Caco-2 (cell line): ENCODE measurements at regions of chr21 and their contacts with region 1.

Region 1: DNA sequence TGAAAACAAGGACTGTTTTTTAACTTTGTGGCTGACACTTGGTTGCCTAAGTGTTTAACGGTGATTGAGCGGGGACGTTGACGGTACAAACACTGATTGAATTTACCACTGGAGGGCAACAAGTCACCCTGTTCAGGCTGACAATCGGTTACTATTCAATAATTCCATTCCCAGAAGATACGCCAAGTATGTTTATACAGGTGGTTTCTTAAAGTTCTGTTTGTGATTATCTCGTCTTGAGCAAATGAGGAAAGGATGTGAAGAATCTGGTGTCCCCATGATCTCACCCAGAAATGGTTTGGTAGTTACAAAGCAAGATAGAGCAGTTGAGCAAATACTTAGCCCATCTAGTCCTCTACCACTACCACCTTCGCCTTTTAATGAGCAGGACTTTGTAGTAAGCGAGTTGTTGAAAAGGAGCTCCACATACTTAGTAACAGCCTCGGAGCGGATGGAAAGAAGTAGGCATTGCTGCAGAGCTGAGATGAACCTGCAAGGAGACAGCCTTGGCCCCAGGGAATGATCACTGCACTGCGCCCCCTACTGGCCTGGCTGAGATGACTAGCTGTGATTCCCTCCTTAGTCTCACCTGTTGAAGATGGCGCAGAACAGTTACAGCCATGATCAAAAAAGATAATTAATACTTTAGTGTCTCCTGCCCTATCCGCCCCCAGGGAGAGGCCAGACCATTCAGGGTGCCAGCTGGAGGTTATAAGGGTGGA is 36.3 kb downstream of the IFNAR1 start:
- DNase-seq: peak; percentile 84 to 88
- H3K4me3 ChIP-seq: peak overlapping the region; percentile 31
- H3K4me3 Mint-ChIP-seq: peak overlapping the region; percentile 68
- H3K27ac Mint-ChIP-seq: peak overlapping the region; percentile 79
- H3K4me1 ChIP-seq: peaks cover 18% of the 10 kb centered on the region
- H3K4me1 Mint-ChIP-seq: peaks cover 14% of the 10 kb centered on the region
- H3K27me3 ChIP-seq: no peaks in the 10 kb centered on the region
- H3K27me3 Mint-ChIP-seq: no peaks in the 10 kb centered on the region
- CTCF ChIP-seq: peak; percentile 84 to 87

Region 2: GRCh38 chr21:33205476-33205875 is 155.6 kb before region 1 on chr21:
- CTCF ChIA-PET with region 1: interaction called, 19 read pairs
- POLR2A ChIA-PET with region 1: interaction called, 7 read pairs
- intact Hi-C with region 1: loop called (anchors 1 kb)
- DNase-seq: no peak
- H3K4me3 ChIP-seq: no peak overlapping the region
- H3K4me3 Mint-ChIP-seq: peak overlapping the region; percentile 60
- H3K27ac Mint-ChIP-seq: peak overlapping the region; percentile 77
- H3K4me1 ChIP-seq: peaks cover 33% of the 10 kb centered on the region
- H3K4me1 Mint-ChIP-seq: peaks cover 36% of the 10 kb centered on the region
- H3K27me3 ChIP-seq: no peaks in the 10 kb centered on the region
- H3K27me3 Mint-ChIP-seq: no peaks in the 10 kb centered on the region
- CTCF ChIP-seq: no peak

Region 3: GRCh38 chr21:33348706-33349105 is 12.3 kb before region 1 on chr21:
- CTCF ChIA-PET with region 1: interaction called, 12 read pairs
- POLR2A ChIA-PET with region 1: no interaction called
- intact Hi-C with region 1: no loop called
- DNase-seq: no peak
- H3K4me3 ChIP-seq: no peak overlapping the region
- H3K4me3 Mint-ChIP-seq: no peak overlapping the region
- H3K27ac Mint-ChIP-seq: no peak overlapping the region
- H3K4me1 ChIP-seq: no peaks in the 10 kb centered on the region
- H3K4me1 Mint-ChIP-seq: no peaks in the 10 kb centered on the region
- H3K27me3 ChIP-seq: no peaks in the 10 kb centered on the region
- H3K27me3 Mint-ChIP-seq: no peaks in the 10 kb centered on the region
- CTCF ChIP-seq: no peak

Region 4: DNA sequence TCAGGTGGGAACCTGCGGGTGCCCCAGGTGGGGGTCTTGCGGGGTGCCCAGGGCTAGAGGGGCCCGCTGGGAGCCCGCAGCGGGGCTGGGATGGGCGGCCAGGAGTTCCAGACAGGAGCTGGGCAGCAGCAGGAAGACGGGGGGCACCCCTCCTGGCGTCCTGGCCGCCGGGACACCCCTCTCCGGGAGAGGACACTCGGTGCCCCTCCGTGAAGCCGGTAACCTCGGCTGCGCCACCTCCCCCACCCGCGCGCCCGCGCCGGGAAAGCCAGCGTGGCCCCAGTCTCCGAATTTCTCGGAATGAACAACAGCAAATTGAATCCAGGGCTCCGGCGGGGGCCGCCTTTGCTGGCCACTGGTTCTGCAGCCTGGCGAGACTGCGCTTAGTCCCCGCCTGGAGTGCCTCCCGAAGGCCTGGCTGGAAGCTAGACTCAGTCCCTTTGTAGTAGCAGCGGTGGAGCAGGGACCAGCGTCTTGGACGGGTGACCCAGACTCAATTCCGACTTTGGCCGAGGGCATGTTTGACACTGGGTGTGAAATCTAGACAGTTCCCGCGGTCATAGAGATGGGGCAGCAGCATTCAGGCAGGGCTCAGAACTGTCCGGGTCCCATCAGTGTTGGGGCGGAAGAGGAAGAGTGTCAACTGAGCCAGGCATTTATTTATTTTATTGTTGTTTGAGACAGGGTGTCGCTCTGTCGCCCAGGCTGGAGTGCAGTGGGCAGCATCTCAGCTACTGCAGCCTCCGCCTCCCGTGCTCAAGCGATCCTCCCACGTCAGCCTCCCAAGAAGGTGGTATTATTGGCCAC is 42.9 kb after region 1 on chr21:
- CTCF ChIA-PET with region 1: interaction called, 4 read pairs
- POLR2A ChIA-PET with region 1: interaction called, 11 read pairs
- intact Hi-C with region 1: loop called (anchors 2 kb)
- DNase-seq: peak; percentile 57 to 65
- H3K4me3 ChIP-seq: peak overlapping the region; percentile 89
- H3K4me3 Mint-ChIP-seq: peak overlapping the region; percentile 99
- H3K27ac Mint-ChIP-seq: peak overlapping the region; percentile 96
- H3K4me1 ChIP-seq: peaks cover 26% of the 10 kb centered on the region
- H3K4me1 Mint-ChIP-seq: peaks cover 22% of the 10 kb centered on the region
- H3K27me3 ChIP-seq: no peaks in the 10 kb centered on the region
- H3K27me3 Mint-ChIP-seq: no peaks in the 10 kb centered on the region
- CTCF ChIP-seq: no peak

Region 5: DNA sequence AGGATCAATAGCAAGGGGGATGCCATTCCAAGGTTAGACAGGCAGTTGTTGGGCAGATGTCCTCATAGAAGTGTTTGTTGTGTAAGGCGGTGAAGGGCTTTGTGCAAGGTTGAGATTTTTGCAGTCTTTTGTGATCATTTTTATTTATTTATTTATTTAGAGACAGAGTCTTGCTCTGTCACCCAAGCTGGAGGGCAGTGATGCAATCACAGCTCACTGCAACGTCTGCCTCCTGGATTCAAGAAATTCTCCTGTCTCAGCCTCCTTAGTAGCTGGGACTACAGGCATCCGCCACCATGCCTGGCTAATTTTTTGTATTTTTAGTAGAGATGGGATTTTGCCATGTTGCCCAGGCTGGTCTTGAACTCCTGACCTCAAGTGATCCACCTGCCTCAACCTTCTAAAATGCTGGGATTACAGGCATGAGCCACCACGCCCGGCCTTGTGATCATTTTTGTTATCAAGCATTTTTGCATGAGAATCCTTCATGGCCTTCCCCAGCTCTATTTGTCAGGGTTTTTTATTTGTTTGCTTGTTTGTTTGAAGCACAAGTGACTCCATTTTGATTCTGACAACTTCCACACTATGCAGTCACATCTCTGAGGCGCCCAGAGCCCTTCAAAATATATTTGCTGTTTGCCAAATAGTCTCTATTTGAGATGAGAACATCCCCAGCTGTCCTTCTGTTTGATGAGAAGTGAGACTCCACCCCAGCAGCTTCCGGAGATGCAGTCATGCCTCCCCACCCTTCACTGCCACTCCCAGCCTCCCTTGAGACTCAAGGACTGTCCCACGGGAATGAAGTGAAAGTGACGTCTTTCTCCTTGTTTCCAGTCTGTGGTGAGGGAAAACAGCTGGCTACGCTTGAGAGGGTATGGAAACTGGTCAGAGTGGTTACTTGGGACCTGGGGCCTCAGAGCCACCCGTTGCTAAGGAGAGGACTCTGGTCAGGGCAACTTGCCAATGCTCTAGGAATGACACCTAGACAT is 80.7 kb after region 1 on chr21:
- CTCF ChIA-PET with region 1: interaction called, 40 read pairs
- POLR2A ChIA-PET with region 1: interaction called, 5 read pairs
- intact Hi-C with region 1: loop called (anchors 1 kb)
- DNase-seq: no peak
- H3K4me3 ChIP-seq: no peak overlapping the region
- H3K4me3 Mint-ChIP-seq: no peak overlapping the region
- H3K27ac Mint-ChIP-seq: no peak overlapping the region
- H3K4me1 ChIP-seq: no peaks in the 10 kb centered on the region
- H3K4me1 Mint-ChIP-seq: peaks cover 6% of the 10 kb centered on the region
- H3K27me3 ChIP-seq: no peaks in the 10 kb centered on the region
- H3K27me3 Mint-ChIP-seq: no peaks in the 10 kb centered on the region
- CTCF ChIP-seq: no peak